ENCODE measurements at regions of chr11 and their contacts with region 1.

Region 1: GRCh38 chr11:9250139-9250582 is 15.0 kb downstream of the DENND5A start:
- DNase-seq: peak; percentile 36
- H3K4me3 Mint-ChIP-seq: peak overlapping the region; percentile 38
- H3K27ac Mint-ChIP-seq: peak overlapping the region; percentile 50
- H3K4me1 Mint-ChIP-seq: peaks cover 61% of the 10 kb centered on the region
- H3K27me3 Mint-ChIP-seq: peaks cover 1% of the 10 kb centered on the region

Region 2: GRCh38 chr11:9060700-9061111 is 189.5 kb before region 1 on chr11:
- intact Hi-C with region 1: loop called (anchors 2 kb)
- DNase-seq: peak; percentile 48
- H3K4me3 Mint-ChIP-seq: no peak overlapping the region
- H3K27ac Mint-ChIP-seq: peak overlapping the region; percentile 40
- H3K4me1 Mint-ChIP-seq: peaks cover 12% of the 10 kb centered on the region
- H3K27me3 Mint-ChIP-seq: peaks cover 16% of the 10 kb centered on the region

Region 3: GRCh38 chr11:9203691-9204311 is 46.4 kb before region 1 on chr11:
- intact Hi-C with region 1: loop called (anchors 2 kb)
- DNase-seq: no peak
- H3K4me3 Mint-ChIP-seq: no peak overlapping the region
- H3K27ac Mint-ChIP-seq: no peak overlapping the region
- H3K4me1 Mint-ChIP-seq: peaks cover 31% of the 10 kb centered on the region
- H3K27me3 Mint-ChIP-seq: no peaks in the 10 kb centered on the region

Region 4: DNA sequence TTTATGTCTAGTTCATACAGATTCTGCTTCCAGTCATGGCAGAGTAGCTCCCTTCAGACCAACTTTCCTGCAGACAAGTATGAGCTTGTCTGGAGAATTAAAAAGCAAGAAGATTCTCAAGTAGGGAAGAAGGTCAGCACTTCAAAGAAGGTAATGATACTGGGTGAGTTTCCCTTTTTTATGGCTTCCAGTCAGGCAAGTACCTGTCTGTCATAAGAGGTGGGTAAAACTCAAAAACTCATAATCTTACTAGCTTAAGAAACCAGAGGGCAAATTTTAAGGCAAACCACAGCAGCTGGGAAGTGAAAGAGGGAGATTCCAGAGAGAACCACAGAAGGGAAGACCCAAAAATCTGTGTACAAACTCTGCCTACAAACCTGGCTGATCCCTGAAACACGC is 39.2 kb before region 1 on chr11:
- intact Hi-C with region 1: loop called (anchors 1 kb)
- DNase-seq: no peak
- H3K4me3 Mint-ChIP-seq: peak overlapping the region; percentile 41
- H3K27ac Mint-ChIP-seq: peak overlapping the region; percentile 21
- H3K4me1 Mint-ChIP-seq: peaks cover 63% of the 10 kb centered on the region
- H3K27me3 Mint-ChIP-seq: peaks cover 2% of the 10 kb centered on the region

Region 5: DNA sequence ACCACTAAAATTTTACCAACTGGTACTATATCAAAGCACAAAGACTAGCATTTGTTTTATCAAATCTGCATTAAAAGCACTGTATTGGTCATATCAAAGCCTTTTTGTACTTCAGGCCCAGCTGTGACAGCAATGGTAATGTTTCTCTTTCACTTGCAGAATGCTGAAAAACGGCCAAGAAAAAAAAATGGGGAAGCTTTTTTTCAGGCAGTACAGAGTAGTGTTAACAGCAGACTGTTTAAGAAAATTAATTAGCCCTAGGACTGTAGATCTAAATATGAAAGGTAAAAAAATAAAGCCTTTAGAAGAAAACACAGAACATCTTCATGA is 18.3 kb before region 1 on chr11:
- intact Hi-C with region 1: loop called (anchors 2 kb)
- DNase-seq: no peak
- H3K4me3 Mint-ChIP-seq: peak overlapping the region; percentile 49
- H3K27ac Mint-ChIP-seq: peak overlapping the region; percentile 27
- H3K4me1 Mint-ChIP-seq: peaks cover 34% of the 10 kb centered on the region
- H3K27me3 Mint-ChIP-seq: no peaks in the 10 kb centered on the region

Region 6: GRCh38 chr11:9280655-9281301 is 30.6 kb after region 1 on chr11:
- intact Hi-C with region 1: loop called (anchors 1 kb)
- DNase-seq: peak; percentile 64
- H3K4me3 Mint-ChIP-seq: peak overlapping the region; percentile 60
- H3K27ac Mint-ChIP-seq: peak overlapping the region; percentile 57
- H3K4me1 Mint-ChIP-seq: peaks cover 15% of the 10 kb centered on the region
- H3K27me3 Mint-ChIP-seq: peaks cover 6% of the 10 kb centered on the region

Region 7: DNA sequence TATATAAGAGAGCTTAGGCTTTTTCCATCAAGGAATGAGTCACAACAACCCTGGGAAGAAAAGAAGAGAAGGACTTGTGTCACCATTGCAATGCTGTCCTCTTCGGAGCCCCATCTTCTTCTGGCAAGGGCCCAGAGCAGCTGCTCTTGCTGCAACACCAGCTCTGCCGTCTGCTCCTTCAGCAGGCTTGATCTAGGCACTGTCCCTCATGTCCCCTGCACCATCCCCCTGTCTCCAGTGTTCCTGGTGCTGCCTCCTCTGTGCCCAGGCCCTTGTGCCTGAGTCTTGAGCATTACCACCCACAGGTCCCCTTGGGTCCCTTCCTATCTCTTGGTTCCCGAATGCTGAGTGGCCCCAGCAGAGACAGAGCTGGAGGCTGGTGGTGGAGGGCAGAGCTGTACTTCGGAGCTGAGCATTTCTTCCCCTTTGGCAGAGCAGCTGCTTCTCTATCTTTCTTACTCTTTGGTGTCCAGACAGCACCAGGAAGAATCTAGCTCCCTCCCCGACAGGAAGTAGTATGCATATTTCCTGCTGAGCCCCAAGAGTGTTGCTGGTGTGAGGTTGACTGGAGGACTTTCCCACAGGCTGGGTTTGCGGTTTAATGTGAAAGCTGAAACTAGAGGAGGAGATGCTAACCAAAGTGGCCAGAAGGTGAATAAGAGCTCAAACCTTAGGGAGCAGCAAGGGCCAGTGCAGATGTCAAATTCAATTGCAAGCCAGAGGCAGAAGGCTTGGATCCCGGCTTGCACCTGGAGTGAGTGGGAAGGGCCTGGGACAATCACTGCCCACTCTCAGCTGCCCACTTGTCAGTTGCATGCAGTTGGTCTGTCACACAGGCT is 351.1 kb after region 1 on chr11:
- intact Hi-C with region 1: loop called (anchors 1 kb)
- DNase-seq: peak; percentile 74
- H3K4me3 Mint-ChIP-seq: peak overlapping the region; percentile 71
- H3K27ac Mint-ChIP-seq: peak overlapping the region; percentile 90
- H3K4me1 Mint-ChIP-seq: peaks cover 34% of the 10 kb centered on the region
- H3K27me3 Mint-ChIP-seq: peaks cover 4% of the 10 kb centered on the region